ENCODE measurements at regions of chr18 and their contacts with region 1.

Region 1: GRCh38 chr18:9066817-9067306 is 35.6 kb upstream of the NDUFV2 start:
- DNase-seq: no peak
- H3K4me3 ChIP-seq: no peak overlapping the region
- H3K27ac ChIP-seq: no peak overlapping the region
- H3K4me1 ChIP-seq: no peaks in the 10 kb centered on the region
- H3K27me3 ChIP-seq: no peaks in the 10 kb centered on the region
- CTCF ChIP-seq: no peak
- POLR2A ChIP-seq: no peak

Region 2: GRCh38 chr18:9147440-9148202 is 80.8 kb after region 1 on chr18:
- intact Hi-C with region 1: loop called (anchors 10 kb)
- DNase-seq: no peak
- H3K4me3 ChIP-seq: no peak overlapping the region
- H3K27ac ChIP-seq: peak overlapping the region in 1 of 2 donors; percentile 48
- H3K4me1 ChIP-seq: peaks cover 0 to 21% of the 10 kb centered on the region in 2 donors
- H3K27me3 ChIP-seq: no peaks in the 10 kb centered on the region
- CTCF ChIP-seq: peak in 2 of 3 donors; percentile 60 to 81
- POLR2A ChIP-seq: no peak

Region 3: GRCh38 chr18:9913526-9914333 is 846.9 kb after region 1 on chr18 and contains the start of gene VAPA:
- intact Hi-C with region 1: no loop called
- DNase-seq: peak; percentile 93 to 94
- H3K4me3 ChIP-seq: peak within 1 kb of the TSS; percentile 91 to 97 (median 91)
- H3K27ac ChIP-seq: peak within 1 kb of the TSS; percentile 99 to 100
- H3K4me1 ChIP-seq: peaks cover 0 to 17% of the 10 kb centered on the region in 2 donors
- H3K27me3 ChIP-seq: no peaks in the 10 kb centered on the region
- CTCF ChIP-seq: peak in 1 of 3 donors; percentile 20
- POLR2A ChIP-seq: peak; percentile 90
- total RNA-seq, gene VAPA: 235 to 263 (median 260) TPM

Measured in breast epithelium (tissue), 4 donors.